ENCODE measurements at regions of chr1 and their contacts with region 1.

Region 1: GRCh38 chr1:108746372-108747205 is at the start of gene STXBP3:
- DNase-seq: peak; percentile 100
- H3K4me3 ChIP-seq: peak within 1 kb of the TSS; percentile 84 to 94 (median 89)
- H3K27ac ChIP-seq: peak within 1 kb of the TSS; percentile 97 to 99 (median 98)
- H3K4me1 ChIP-seq: peaks cover 10 to 39% (median 29%) of the 10 kb centered on the region in 4 donors
- H3K27me3 ChIP-seq: no peaks in the 10 kb centered on the region
- CTCF ChIP-seq: peak; percentile 93 to 96 (median 95)
- EP300 ChIP-seq: no peak
- POLR2A ChIP-seq: peak; percentile 90
- total RNA-seq, gene STXBP3: 54.8 to 67.7 (median 63.8) TPM

Region 2: DNA sequence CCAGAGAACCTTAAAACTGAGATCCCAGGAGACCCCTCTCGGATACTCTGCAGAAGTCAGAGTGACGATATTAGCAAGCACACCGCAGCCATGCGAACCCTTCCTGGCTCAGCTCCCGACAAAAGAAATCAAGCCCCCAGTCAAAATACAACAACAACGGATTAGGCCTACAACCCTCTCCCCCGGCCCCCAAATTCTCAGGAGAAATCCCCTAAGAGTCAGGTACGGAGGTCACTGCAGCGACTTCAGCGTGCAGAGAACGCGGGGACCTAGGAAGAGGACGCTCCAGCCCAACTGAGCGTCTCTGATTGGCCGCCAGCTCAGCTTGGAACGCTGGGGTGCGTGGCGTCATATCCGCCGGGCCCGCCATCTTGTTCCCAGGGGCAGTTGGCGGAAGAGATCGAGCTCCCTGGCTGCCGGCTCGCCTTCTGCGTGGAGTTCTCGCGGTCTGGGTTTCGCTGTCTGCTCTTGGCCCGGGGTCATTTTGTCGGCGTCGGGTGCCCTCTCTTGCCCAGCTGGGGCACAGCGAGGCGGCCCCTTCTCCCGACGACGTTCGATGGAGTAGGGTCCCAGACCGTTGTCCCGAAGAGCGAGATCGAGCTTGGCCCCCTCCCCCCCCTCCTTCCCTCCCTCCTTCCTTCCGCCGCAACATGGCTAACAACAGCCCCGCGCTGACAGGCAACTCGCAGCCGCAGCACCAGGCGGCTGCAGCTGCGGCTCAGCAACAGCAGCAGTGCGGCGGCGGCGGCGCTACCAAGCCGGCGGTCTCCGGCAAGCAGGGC is 54.5 kb before region 1 on chr1 and contains the start of gene PRPF38B:
- intact Hi-C with region 1: loop called (anchors 2 kb)
- DNase-seq: peak; percentile 99
- H3K4me3 ChIP-seq: peak within 1 kb of the TSS; percentile 89 to 96 (median 90)
- H3K27ac ChIP-seq: peak within 1 kb of the TSS; percentile 96 to 98 (median 97)
- H3K4me1 ChIP-seq: peaks cover 24 to 35% (median 33%) of the 10 kb centered on the region in 4 donors
- H3K27me3 ChIP-seq: peaks cover 0 to 4% (median 0%) of the 10 kb centered on the region in 4 donors
- CTCF ChIP-seq: no peak
- EP300 ChIP-seq: no peak
- POLR2A ChIP-seq: peak; percentile 92
- total RNA-seq, gene PRPF38B: 15.9 to 32.4 (median 16.9) TPM

Region 3: GRCh38 chr1:108847494-108847893 is 100.9 kb after region 1 on chr1:
- intact Hi-C with region 1: no loop called
- DNase-seq: no peak
- H3K4me3 ChIP-seq: no peak overlapping the region
- H3K27ac ChIP-seq: no peak overlapping the region
- H3K4me1 ChIP-seq: peaks cover 7 to 44% (median 31%) of the 10 kb centered on the region in 4 donors
- H3K27me3 ChIP-seq: no peaks in the 10 kb centered on the region
- CTCF ChIP-seq: no peak
- EP300 ChIP-seq: no peak
- POLR2A ChIP-seq: no peak

Region 4: DNA sequence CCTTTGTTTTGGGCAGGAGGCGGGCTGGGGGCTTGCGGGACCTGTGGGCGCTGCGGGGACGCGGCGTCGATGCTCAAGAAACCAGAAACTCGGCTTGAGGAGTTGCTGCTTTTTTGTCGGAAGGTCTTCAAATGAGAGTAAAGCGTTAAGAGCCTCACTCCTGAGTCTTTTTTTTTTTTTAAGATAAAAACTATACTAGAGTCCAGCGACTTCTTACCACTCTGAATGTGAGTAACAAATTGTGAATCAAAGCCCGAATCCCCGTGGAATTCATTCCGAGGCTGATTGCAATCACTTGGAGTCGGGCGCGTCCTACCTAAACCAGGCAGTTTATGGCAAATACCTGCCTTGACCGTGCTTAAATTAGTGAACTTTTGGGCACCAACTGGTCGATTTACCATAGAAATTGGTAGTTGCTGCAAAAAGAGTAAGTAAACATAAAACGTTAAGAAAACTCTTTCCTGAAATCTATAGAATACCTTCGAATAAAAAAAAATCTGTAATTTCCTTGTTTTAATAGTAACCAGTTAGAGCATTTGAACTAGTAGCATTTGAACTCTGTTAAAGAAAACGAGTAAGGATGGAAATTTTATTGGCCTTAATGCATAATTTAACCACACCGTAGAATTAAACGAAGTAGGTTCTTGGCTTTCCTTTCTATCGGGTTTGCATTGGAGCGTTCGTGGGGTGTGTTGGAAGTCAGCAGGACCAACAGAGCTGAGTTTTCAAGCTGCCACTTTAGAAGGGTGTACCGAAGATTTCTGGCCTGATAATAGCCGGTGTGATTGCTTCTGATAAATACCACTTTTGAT is 131.0 kb after region 1 on chr1:
- intact Hi-C with region 1: loop called (anchors 5 kb)
- DNase-seq: peak; percentile 87
- H3K4me3 ChIP-seq: peak overlapping the region; percentile 73 to 98 (median 89)
- H3K27ac ChIP-seq: peak overlapping the region; percentile 82 to 92 (median 91)
- H3K4me1 ChIP-seq: peaks cover 0 to 40% (median 33%) of the 10 kb centered on the region in 4 donors
- H3K27me3 ChIP-seq: no peaks in the 10 kb centered on the region
- CTCF ChIP-seq: no peak
- EP300 ChIP-seq: no peak
- POLR2A ChIP-seq: no peak

Region 5: GRCh38 chr1:108897865-108898720 is 151.5 kb after region 1 on chr1:
- intact Hi-C with region 1: loop called (anchors 5 kb)
- DNase-seq: no peak
- H3K4me3 ChIP-seq: no peak overlapping the region
- H3K27ac ChIP-seq: peak overlapping the region; percentile 67 to 74 (median 72)
- H3K4me1 ChIP-seq: peaks cover 0 to 34% (median 32%) of the 10 kb centered on the region in 4 donors
- H3K27me3 ChIP-seq: no peaks in the 10 kb centered on the region
- CTCF ChIP-seq: peak; percentile 73 to 77 (median 75)
- EP300 ChIP-seq: no peak
- POLR2A ChIP-seq: no peak

Measured in esophagus muscularis mucosa (tissue), 4 donors.